Esophagus muscularis mucosa (tissue), 4 donors: ENCODE measurements at regions of chr16 and their contacts with region 1.

Region 1: GRCh38 chr16:27235055-27235937 is 32.0 kb downstream of the KDM8 start:
- DNase-seq: peak; percentile 95
- H3K4me3 ChIP-seq: peak overlapping the region in 3 of 4 donors; percentile 4 to 24 (median 22)
- H3K27ac ChIP-seq: peak overlapping the region; percentile 69 to 78 (median 74)
- H3K4me1 ChIP-seq: peaks cover 37 to 56% (median 55%) of the 10 kb centered on the region in 4 donors
- H3K27me3 ChIP-seq: no peaks in the 10 kb centered on the region
- CTCF ChIP-seq: peak; percentile 82 to 84 (median 83)
- EP300 ChIP-seq: no peak
- POLR2A ChIP-seq: no peak

Region 2: DNA sequence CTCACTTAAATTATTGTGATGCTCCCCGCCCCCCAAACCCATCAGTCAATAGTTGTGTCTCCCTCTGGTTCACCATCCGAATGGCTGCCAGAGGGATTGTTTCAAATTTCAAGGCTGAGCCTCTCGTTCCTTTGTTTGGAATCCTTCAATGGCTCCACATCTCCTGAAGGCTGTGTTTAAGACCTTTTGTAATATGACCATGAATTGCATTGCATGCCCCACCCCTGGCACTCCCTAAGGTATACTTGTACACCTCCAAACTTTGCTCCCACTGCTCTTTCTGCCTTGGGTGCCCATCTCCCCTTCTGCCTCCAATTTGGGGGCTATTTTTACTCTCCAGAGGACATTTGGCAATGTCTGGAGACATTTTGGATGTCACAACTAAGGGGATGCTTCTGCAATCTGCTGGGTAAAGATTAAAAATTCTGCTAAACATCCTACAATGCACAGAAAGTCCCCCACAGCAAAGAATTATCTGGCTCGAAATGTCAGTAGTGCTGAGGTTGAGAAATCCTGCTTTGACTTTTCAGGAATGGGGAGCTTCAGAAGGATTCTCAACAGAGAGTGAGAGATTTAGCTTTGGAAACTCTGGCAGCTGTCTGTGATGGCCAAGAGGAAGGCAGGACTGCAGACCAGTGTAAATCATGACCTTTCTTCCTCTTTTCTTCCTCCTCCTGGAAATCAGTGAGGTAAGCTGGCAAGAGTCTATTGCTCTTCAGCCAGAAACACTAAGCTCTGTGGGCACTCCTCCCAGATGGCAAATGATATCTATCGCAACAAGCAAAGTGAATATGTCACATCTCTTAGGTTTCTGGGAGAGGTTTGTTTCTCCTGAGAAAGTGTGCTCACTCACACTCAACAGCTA is 69.8 kb after region 1 on chr16:
- intact Hi-C with region 1: no loop called
- DNase-seq: no peak
- H3K4me3 ChIP-seq: no peak overlapping the region
- H3K27ac ChIP-seq: peak overlapping the region in 2 of 4 donors; percentile 20 to 26
- H3K4me1 ChIP-seq: peaks cover 0 to 14% (median 8%) of the 10 kb centered on the region in 4 donors
- H3K27me3 ChIP-seq: no peaks in the 10 kb centered on the region
- CTCF ChIP-seq: no peak
- EP300 ChIP-seq: no peak
- POLR2A ChIP-seq: no peak

Region 3: GRCh38 chr16:27367461-27368357 is 132.4 kb after region 1 on chr16:
- intact Hi-C with region 1: loop called (anchors 2 kb)
- DNase-seq: peak; percentile 96
- H3K4me3 ChIP-seq: peak overlapping the region; percentile 19 to 51 (median 34)
- H3K27ac ChIP-seq: peak overlapping the region; percentile 52 to 65 (median 58)
- H3K4me1 ChIP-seq: peaks cover 12 to 45% (median 34%) of the 10 kb centered on the region in 4 donors
- H3K27me3 ChIP-seq: no peaks in the 10 kb centered on the region
- CTCF ChIP-seq: peak; percentile 84 to 92 (median 85)
- EP300 ChIP-seq: no peak
- POLR2A ChIP-seq: no peak